Heart right ventricle (tissue), 16 donors: ENCODE measurements at regions of chr4 and their contacts with region 1.

Region 1: DNA sequence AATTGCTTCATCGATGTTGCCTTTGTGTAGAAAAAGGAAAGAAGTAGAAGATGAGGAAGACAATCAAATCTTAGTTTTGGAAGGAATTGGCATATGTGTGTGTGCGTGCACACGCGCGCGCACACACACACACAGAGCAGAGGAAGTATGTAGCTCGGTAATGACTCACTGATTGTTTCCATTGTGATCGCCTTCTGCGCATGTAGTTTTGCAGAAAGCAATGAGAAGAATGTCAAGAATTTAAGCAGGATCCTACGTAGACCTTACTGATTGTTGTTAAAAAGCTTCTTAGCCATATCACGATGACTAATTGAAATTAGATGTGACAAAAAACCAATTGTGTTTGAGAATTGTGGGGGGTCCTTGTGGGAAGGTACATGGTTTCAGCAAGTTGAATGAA is 12.8 kb upstream of the LIMCH1 start:
- DNase-seq: peak in 1 of 2 donors; percentile 36
- ATAC-seq: peak; percentile 61 to 89 (median 78)
- H3K4me3 ChIP-seq: no peak overlapping the region
- H3K27ac ChIP-seq: peak overlapping the region in 7 of 10 donors; percentile 6 to 72 (median 46)
- H3K4me1 ChIP-seq: peaks cover 0 to 67% (median 27%) of the 10 kb centered on the region in 9 donors
- H3K27me3 ChIP-seq: no peaks in the 10 kb centered on the region
- CTCF ChIP-seq: no peak

Region 2: GRCh38 chr4:41307638-41308037 is 217.5 kb before region 1 on chr4:
- intact Hi-C with region 1: loop called in 1 of 10 experiments (anchors 1 kb)
- DNase-seq: peak in 1 of 2 donors; percentile 31
- ATAC-seq: peak; percentile 69 to 91 (median 78)
- H3K4me3 ChIP-seq: no peak overlapping the region
- H3K27ac ChIP-seq: peak overlapping the region in 7 of 10 donors; percentile 42 to 68 (median 45)
- H3K4me1 ChIP-seq: peaks cover 0 to 28% (median 11%) of the 10 kb centered on the region in 9 donors
- H3K27me3 ChIP-seq: no peaks in the 10 kb centered on the region
- CTCF ChIP-seq: no peak

Region 3: GRCh38 chr4:41448934-41449333 is 76.2 kb before region 1 on chr4:
- intact Hi-C with region 1: loop called in 1 of 10 experiments (anchors 5 kb)
- DNase-seq: peak in 1 of 2 donors; percentile 63
- ATAC-seq: peak in 7 of 8 donors; percentile 48 to 81 (median 69)
- H3K4me3 ChIP-seq: no peak overlapping the region
- H3K27ac ChIP-seq: peak overlapping the region in 5 of 10 donors; percentile 6 to 37 (median 23)
- H3K4me1 ChIP-seq: peaks cover 0 to 60% (median 39%) of the 10 kb centered on the region in 9 donors
- H3K27me3 ChIP-seq: no peaks in the 10 kb centered on the region
- CTCF ChIP-seq: no peak